A673 (cell line): ENCODE measurements at regions of chr13 and their contacts with region 1.

Region 1: DNA sequence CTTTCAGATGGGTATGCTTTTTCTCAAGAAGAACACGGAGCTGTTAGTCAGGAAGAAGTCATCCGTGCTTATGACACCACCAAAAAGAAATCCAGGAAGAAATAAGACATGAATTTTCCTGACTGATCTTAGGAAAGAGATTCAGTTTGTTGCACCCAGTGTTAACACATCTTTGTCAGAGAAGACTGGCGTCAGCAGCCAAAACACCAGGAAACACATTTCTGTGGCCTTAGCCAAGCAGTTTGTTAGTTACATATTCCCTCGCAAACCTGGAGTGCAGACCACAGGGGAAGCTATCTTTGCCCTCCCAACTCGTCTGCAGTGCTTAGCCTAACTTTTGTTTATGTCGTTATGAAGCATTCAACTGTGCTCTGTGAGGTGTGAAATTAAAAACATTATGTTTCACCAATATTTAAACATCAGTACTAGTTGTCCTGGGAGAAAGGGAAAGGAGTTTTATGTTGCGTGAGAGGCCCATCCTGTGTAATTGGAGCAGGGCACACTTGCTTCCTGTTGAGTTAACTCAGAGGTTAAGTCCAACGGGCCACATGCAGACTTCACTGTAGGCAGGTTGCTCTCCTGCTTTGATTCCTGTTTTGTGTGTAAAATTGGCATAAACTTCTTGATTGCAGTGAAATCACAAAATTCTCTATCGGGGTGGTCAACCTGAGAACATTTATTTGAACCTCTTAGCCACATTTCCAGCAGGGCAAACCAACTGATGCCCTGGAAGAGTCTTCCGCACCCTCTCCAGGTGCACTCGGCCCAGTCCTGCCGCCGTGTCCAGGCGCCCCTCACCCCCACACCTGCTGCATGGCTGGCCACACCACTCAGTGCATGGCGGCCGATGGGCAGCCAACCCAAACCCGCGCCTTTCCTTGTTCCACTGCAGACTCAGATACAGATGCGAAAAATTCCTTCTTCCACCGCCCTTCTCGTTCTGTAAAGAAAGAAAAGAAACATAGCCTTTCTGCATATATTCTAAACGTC is 31.6 kb downstream of the SHISA2 start:
- DNase-seq: peak; percentile 19
- H3K4me3 ChIP-seq: no peak overlapping the region
- H3K27ac ChIP-seq: no peak overlapping the region
- H3K4me1 ChIP-seq: peaks cover 27% of the 10 kb centered on the region
- H3K27me3 ChIP-seq: no peaks in the 10 kb centered on the region
- CTCF ChIP-seq: no peak

Region 2: DNA sequence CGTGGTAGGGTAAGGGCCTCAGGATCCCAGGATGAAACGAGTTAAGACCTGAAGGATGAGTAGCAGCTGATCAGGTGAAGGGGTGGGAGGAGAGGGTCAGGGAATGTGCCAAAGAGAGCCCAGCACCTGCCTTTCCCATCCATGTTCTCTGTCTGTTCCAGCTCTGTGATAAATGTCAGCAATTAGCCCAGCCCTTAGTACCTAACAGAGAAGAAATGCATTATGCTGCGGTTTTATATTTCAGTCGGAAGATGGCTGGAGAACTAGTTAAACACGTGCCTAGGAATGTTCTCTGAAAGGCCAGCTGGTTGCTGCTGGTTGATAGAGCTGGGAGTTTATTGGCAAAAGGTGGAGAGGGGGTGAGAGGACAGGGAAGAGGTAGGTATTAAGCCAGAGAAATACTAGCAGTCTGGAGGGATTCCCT is 236.6 kb before region 1 on chr13:
- CTCF ChIA-PET with region 1: no interaction called
- POLR2A ChIA-PET with region 1: no interaction called
- intact Hi-C with region 1: loop called (anchors 5 kb)
- DNase-seq: no peak
- H3K4me3 ChIP-seq: no peak overlapping the region
- H3K27ac ChIP-seq: no peak overlapping the region
- H3K4me1 ChIP-seq: peaks cover 16% of the 10 kb centered on the region
- H3K27me3 ChIP-seq: no peaks in the 10 kb centered on the region
- CTCF ChIP-seq: no peak

Region 3: GRCh38 chr13:25796466-25796865 is 223.7 kb before region 1 on chr13:
- CTCF ChIA-PET with region 1: no interaction called
- POLR2A ChIA-PET with region 1: no interaction called
- intact Hi-C with region 1: no loop called
- DNase-seq: no peak
- H3K4me3 ChIP-seq: no peak overlapping the region
- H3K27ac ChIP-seq: no peak overlapping the region
- H3K4me1 ChIP-seq: no peaks in the 10 kb centered on the region
- H3K27me3 ChIP-seq: no peaks in the 10 kb centered on the region
- CTCF ChIP-seq: no peak

Region 4: DNA sequence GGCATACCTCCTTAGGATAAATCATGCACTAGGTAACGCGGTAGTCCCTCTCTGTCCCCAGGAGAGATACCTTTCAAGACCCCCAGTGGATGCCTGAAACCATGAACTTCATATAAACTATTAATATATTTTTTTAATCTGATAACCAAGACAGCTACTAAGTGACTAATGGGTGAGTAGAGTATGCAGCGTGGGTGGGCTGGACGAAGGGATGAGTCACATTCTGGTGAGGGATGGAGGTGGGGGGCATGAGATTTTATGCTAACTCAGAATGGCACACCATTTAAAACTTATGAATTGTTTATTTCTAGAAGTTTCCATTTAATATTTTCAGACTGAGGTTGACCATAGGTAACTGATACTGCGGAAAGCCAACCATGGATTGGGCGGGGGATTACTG is 280.0 kb after region 1 on chr13:
- CTCF ChIA-PET with region 1: no interaction called
- POLR2A ChIA-PET with region 1: no interaction called
- intact Hi-C with region 1: no loop called
- DNase-seq: peak; percentile 13
- H3K4me3 ChIP-seq: no peak overlapping the region
- H3K27ac ChIP-seq: no peak overlapping the region
- H3K4me1 ChIP-seq: no peaks in the 10 kb centered on the region
- H3K27me3 ChIP-seq: no peaks in the 10 kb centered on the region
- CTCF ChIP-seq: no peak